Heart right ventricle (tissue), 16 donors: ENCODE measurements at regions of chr2 and their contacts with region 1.

Region 1: GRCh38 chr2:16665748-16666448 is at the start of gene CYRIA:
- DNase-seq: peak; percentile 63 to 77
- ATAC-seq: peak; percentile 69 to 86 (median 80)
- H3K4me3 ChIP-seq: peak within 1 kb of the TSS; percentile 44 to 77 (median 70)
- H3K27ac ChIP-seq: peak within 1 kb of the TSS; percentile 40 to 91 (median 73)
- H3K4me1 ChIP-seq: peaks cover 2 to 53% (median 38%) of the 10 kb centered on the region in 9 donors
- H3K27me3 ChIP-seq: peaks cover 0 to 6% (median 0%) of the 10 kb centered on the region in 7 donors
- CTCF ChIP-seq: no peak
- total RNA-seq, gene CYRIA: 1.5 to 10.6 (median 3.6) TPM

Region 2: GRCh38 chr2:16623031-16623430 is 42.9 kb before region 1 on chr2:
- intact Hi-C with region 1: loop called in 1 of 10 experiments (anchors 5 kb)
- DNase-seq: no peak
- ATAC-seq: no peak
- H3K4me3 ChIP-seq: no peak overlapping the region
- H3K27ac ChIP-seq: peak overlapping the region in 4 of 10 donors; percentile 12 to 88 (median 24)
- H3K4me1 ChIP-seq: peaks cover 0 to 81% (median 42%) of the 10 kb centered on the region in 9 donors
- H3K27me3 ChIP-seq: no peaks in the 10 kb centered on the region
- CTCF ChIP-seq: no peak

Region 3: DNA sequence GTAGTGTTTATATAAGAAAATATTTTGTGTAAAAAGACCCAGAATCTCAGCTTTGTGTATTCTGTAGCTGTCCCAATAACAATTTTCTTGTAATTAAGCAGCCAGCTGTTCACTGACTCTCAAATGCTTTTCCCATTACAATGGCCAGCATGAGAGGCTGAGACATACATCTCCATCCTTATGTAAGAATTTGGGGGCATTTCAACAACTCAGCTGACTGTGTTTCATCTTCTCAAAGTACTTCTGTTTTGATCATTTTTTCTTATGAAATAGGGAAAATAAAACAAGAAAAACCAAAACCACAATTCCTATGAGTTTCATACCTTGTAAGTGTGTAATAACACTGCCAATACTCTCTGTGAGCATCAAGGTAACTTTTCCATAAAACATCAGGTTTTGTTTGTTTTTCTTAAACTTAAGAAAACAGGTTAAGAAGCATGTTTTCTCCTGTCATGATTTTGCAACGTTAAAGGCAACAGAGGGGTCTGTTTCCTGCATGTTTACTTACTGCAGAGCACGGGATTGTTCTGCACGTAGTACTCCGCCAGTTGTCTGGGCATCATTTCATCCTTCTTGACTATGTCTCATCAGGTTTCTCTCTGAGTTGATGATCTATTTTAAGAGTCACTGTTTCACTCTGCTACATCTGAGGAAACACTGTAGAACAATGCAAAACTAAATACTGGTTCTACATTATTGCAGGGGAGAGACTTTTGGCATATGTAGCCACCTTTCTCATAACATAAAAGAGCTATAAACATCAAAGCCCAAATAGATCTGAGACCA is 62.6 kb after region 1 on chr2:
- intact Hi-C with region 1: no loop called
- DNase-seq: no peak
- ATAC-seq: no peak
- H3K4me3 ChIP-seq: no peak overlapping the region
- H3K27ac ChIP-seq: no peak overlapping the region
- H3K4me1 ChIP-seq: peaks cover 0 to 6% (median 0%) of the 10 kb centered on the region in 9 donors
- H3K27me3 ChIP-seq: peaks cover 0 to 8% (median 0%) of the 10 kb centered on the region in 7 donors
- CTCF ChIP-seq: no peak